ENCODE measurements at regions of chr1 and their contacts with region 1.

Region 1: GRCh38 chr1:147890177-147890790 is 12.3 kb upstream of the GJA8 start:
- DNase-seq: peak; percentile 80
- ATAC-seq: peak; percentile 86
- H3K4me3 Mint-ChIP-seq: no peak overlapping the region
- H3K27ac Mint-ChIP-seq: no peak overlapping the region
- H3K4me1 Mint-ChIP-seq: peaks cover 2% of the 10 kb centered on the region
- H3K27me3 Mint-ChIP-seq: peaks cover 1% of the 10 kb centered on the region
- CTCF ChIP-seq: peak; percentile 81

Region 2: GRCh38 chr1:147494998-147495580 is 395.2 kb before region 1 on chr1:
- CTCF ChIA-PET with region 1: interaction called, 11 read pairs
- POLR2A ChIA-PET with region 1: no interaction called
- intact Hi-C with region 1: loop called (anchors 5 kb)
- DNase-seq: peak; percentile 83
- ATAC-seq: peak; percentile 99
- H3K4me3 Mint-ChIP-seq: no peak overlapping the region
- H3K27ac Mint-ChIP-seq: no peak overlapping the region
- H3K4me1 Mint-ChIP-seq: peaks cover 3% of the 10 kb centered on the region
- H3K27me3 Mint-ChIP-seq: peaks cover 4% of the 10 kb centered on the region
- CTCF ChIP-seq: peak; percentile 96

Region 3: DNA sequence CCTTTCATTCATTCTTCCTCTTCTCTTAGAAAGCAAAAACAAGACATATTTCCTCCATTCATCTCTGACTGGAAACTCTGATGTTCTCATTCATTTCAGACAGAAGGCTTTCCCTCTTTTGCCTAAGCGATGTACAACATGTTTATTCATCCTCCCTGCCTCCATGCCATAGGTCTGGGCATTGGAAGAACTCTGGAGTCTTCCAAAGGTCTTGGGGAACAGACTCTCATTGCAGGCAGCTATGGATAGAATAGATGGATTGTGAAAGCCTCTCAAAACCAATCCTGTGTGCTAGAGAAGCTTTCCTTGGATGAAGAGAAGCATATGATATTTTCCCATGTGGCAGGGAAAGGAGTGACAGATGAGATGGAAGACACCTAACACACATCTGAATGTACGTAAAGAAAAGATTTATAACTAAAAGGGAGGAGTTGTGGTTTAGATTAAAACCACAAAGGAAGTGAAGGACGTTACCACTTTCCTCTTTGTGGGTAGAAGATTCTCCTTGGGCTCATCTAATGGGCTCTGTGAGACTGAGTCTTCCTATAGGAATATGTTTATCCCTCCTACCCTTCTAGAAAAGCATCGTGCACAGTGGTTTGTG is 310.2 kb before region 1 on chr1:
- CTCF ChIA-PET with region 1: no interaction called
- POLR2A ChIA-PET with region 1: no interaction called
- intact Hi-C with region 1: no loop called
- DNase-seq: no peak
- ATAC-seq: no peak
- H3K4me3 Mint-ChIP-seq: peak overlapping the region; percentile 30
- H3K27ac Mint-ChIP-seq: peak overlapping the region; percentile 69
- H3K4me1 Mint-ChIP-seq: peaks cover 64% of the 10 kb centered on the region
- H3K27me3 Mint-ChIP-seq: peaks cover 25% of the 10 kb centered on the region
- CTCF ChIP-seq: no peak

Region 4: GRCh38 chr1:147700042-147701006 is 190.0 kb before region 1 on chr1:
- CTCF ChIA-PET with region 1: interaction called, 14 read pairs
- POLR2A ChIA-PET with region 1: no interaction called
- intact Hi-C with region 1: no loop called
- DNase-seq: peak; percentile 74
- ATAC-seq: peak; percentile 95
- H3K4me3 Mint-ChIP-seq: no peak overlapping the region
- H3K27ac Mint-ChIP-seq: no peak overlapping the region
- H3K4me1 Mint-ChIP-seq: peaks cover 5% of the 10 kb centered on the region
- H3K27me3 Mint-ChIP-seq: peaks cover 16% of the 10 kb centered on the region
- CTCF ChIP-seq: peak; percentile 75

Region 5: DNA sequence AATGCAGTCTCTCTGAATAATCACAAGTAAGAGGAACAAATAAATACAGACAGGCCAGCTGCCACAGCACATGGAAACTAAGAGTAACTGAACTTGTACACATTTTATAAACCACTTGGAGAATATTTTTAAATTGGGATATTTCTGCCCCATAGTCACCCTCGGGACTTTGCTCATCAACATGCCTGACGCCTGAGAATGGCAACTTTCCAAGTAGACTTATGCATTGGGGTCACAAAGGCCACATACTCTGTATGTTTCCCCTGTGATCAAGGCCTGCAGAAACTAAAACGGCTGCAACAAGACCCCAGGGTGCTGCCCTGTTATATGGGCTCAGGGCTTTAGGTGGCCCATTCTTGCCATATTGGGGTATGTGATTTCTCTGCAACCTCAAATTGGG is 91.6 kb before region 1 on chr1:
- CTCF ChIA-PET with region 1: no interaction called
- POLR2A ChIA-PET with region 1: no interaction called
- intact Hi-C with region 1: no loop called
- DNase-seq: no peak
- ATAC-seq: no peak
- H3K4me3 Mint-ChIP-seq: no peak overlapping the region
- H3K27ac Mint-ChIP-seq: no peak overlapping the region
- H3K4me1 Mint-ChIP-seq: no peaks in the 10 kb centered on the region
- H3K27me3 Mint-ChIP-seq: peaks cover 2% of the 10 kb centered on the region
- CTCF ChIP-seq: no peak

Region 6: GRCh38 chr1:147840907-147841306 is 49.4 kb before region 1 on chr1:
- CTCF ChIA-PET with region 1: interaction called, 23 read pairs
- POLR2A ChIA-PET with region 1: no interaction called
- intact Hi-C with region 1: no loop called
- DNase-seq: peak; percentile 41
- ATAC-seq: peak; percentile 39
- H3K4me3 Mint-ChIP-seq: no peak overlapping the region
- H3K27ac Mint-ChIP-seq: no peak overlapping the region
- H3K4me1 Mint-ChIP-seq: no peaks in the 10 kb centered on the region
- H3K27me3 Mint-ChIP-seq: peaks cover 3% of the 10 kb centered on the region
- CTCF ChIP-seq: no peak

Region 7: GRCh38 chr1:147912553-147912952 is 22.3 kb after region 1 on chr1:
- CTCF ChIA-PET with region 1: interaction called, 18 read pairs
- POLR2A ChIA-PET with region 1: no interaction called
- intact Hi-C with region 1: no loop called
- DNase-seq: no peak
- ATAC-seq: no peak
- H3K4me3 Mint-ChIP-seq: no peak overlapping the region
- H3K27ac Mint-ChIP-seq: no peak overlapping the region
- H3K4me1 Mint-ChIP-seq: no peaks in the 10 kb centered on the region
- H3K27me3 Mint-ChIP-seq: peaks cover 12% of the 10 kb centered on the region
- CTCF ChIP-seq: no peak

Measured in activated CD8-positive, alpha-beta T cell treated with anti-CD3 and anti-CD28 coated beads for 36 hours (primary cell).